ENCODE measurements at regions of chr1 and their contacts with region 1.

Region 1: DNA sequence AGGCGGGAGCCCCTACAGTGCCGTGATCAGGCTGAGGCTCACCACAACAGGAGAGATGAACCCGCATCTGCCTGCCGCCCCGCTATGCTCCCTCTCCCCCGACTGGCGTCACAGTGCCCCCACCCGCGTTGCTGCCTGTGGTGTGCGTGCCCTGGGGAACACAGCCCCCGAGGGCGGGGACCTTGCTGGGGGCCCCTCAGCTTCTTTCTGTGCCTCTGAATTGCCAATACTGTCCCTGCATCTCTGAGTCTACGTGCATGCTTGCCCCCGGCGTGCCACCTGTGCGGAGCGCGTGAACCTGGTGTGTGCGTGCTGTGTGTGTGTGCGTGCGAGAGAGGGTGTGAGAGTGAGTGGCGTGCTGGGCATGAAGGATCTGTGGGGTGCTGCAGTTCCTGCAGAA is 10.3 kb downstream of the PARS2 start:
- DNase-seq: no peak
- H3K27ac ChIP-seq: no peak overlapping the region
- CTCF ChIP-seq: no peak

Region 2: DNA sequence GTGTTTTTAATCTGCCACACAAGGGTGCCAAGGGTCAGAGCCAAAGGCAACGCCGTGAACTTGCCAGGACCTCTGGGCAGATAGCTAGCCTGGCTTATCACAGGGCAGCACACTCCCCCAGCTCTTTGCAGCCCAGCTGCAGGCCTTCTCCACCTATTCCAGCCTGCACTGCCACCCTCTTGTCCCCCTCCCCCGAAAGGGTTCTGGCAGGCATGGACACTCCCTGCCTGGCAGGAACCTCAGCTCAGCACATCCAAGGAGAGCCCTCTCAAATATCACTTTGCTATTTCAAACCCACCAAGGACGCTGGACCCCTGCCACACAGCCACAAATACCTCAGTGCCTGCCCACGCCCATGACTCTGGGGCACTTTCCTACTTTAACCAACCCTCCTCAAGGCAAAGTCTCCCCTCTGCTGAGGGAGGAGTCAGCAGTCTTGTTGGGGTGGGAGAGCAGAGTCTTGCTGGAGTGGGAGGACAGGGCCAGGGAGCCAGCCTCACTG is 356.9 kb before region 1 on chr1:
- CTCF ChIA-PET with region 1: no interaction called
- POLR2A ChIA-PET with region 1: interaction called, 10 read pairs
- DNase-seq: no peak
- H3K27ac ChIP-seq: peak overlapping the region; percentile 47
- CTCF ChIP-seq: no peak

Region 3: GRCh38 chr1:55353707-55354620 is 599.9 kb after region 1 on chr1:
- CTCF ChIA-PET with region 1: no interaction called
- POLR2A ChIA-PET with region 1: no interaction called
- DNase-seq: no peak
- H3K27ac ChIP-seq: no peak overlapping the region
- CTCF ChIP-seq: no peak